ENCODE measurements at regions of chr14 and their contacts with region 1.

Region 1: GRCh38 chr14:89954070-89955028 is at the start of gene EFCAB11:
- DNase-seq: peak; percentile 98
- H3K4me3 Mint-ChIP-seq: peak within 1 kb of the TSS; percentile 96
- H3K27ac Mint-ChIP-seq: peak within 1 kb of the TSS; percentile 97
- H3K4me1 Mint-ChIP-seq: peaks cover 36% of the 10 kb centered on the region
- H3K27me3 Mint-ChIP-seq: no peaks in the 10 kb centered on the region
- total RNA-seq, gene EFCAB11: 10.6 to 10.8 TPM

Region 2: DNA sequence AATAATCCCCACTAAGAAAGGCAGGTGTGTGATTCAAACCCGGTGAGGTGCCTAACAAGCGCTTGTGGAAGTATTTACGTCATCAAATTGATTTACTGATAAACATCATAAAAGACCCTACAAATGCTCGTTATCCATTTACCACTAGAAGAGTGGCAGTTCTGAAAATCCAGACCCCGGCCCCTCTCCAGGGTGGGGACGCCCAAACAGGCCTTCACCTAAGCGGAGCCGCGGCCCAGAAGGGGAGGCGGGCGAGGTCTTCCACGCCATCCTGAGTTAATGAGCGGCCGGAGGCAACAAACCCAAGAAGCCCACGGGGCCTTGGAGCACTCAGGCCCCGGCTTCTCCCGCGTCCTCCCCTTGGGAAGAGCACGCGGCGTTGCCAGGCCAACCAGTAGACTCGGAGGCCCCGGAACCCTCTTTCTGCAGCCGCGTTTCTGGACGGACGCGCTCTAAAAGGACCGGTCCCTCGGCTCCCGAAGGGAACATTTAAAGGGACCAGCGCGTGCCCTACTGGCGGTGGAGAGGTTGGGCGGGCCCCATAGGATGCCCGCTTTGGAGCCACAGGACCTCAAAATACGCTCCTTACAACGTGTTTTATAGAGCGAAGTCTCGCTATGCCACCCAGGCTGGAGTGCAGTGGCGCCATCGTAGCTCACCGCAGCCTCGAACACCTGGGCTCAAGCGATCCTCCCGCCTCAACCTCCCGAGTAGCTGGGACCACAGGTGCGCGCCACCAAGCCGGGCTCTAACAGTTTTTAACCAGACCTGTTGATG is 1403.1 kb before region 1 on chr14:
- CTCF ChIA-PET with region 1: no interaction called
- POLR2A ChIA-PET with region 1: no interaction called
- intact Hi-C with region 1: loop called (anchors 10 kb)
- DNase-seq: peak; percentile 69
- H3K4me3 Mint-ChIP-seq: peak overlapping the region; percentile 62
- H3K27ac Mint-ChIP-seq: no peak overlapping the region
- H3K4me1 Mint-ChIP-seq: peaks cover 10% of the 10 kb centered on the region
- H3K27me3 Mint-ChIP-seq: peaks cover 34% of the 10 kb centered on the region

Region 3: GRCh38 chr14:89365061-89365801 is 589.1 kb before region 1 on chr14:
- CTCF ChIA-PET with region 1: no interaction called
- POLR2A ChIA-PET with region 1: no interaction called
- intact Hi-C with region 1: loop called (anchors 1 kb)
- DNase-seq: peak; percentile 73
- H3K4me3 Mint-ChIP-seq: peak overlapping the region; percentile 73
- H3K27ac Mint-ChIP-seq: peak overlapping the region; percentile 93
- H3K4me1 Mint-ChIP-seq: peaks cover 53% of the 10 kb centered on the region
- H3K27me3 Mint-ChIP-seq: no peaks in the 10 kb centered on the region

Region 4: DNA sequence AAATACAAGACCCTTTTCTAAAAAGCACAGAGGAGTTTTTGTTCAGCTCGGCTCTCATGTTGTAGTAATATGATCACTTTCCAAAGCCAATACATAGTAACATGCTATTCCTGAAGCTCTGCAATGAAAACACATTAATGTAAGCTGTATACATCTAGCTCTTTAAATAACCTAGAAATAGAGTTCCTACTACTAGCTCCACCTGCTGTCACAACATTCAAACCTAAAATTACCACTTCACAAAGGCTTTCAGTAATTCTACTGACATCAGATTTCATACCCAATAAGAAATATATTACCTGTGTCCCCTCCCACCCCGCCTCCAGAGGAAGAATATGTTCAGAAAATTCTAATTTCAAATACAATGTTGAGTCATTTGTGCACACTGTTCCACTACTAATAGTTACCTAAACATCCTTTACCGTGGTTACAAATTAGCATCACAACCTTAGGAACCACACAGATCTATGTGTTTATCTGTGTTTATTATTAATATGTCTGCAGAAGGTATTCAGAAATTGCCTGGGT is 17.6 kb before region 1 on chr14:
- CTCF ChIA-PET with region 1: interaction called, 61 read pairs
- POLR2A ChIA-PET with region 1: interaction called, 6 read pairs
- intact Hi-C with region 1: no loop called
- DNase-seq: no peak
- H3K4me3 Mint-ChIP-seq: no peak overlapping the region
- H3K27ac Mint-ChIP-seq: no peak overlapping the region
- H3K4me1 Mint-ChIP-seq: peaks cover 6% of the 10 kb centered on the region
- H3K27me3 Mint-ChIP-seq: no peaks in the 10 kb centered on the region

Region 5: DNA sequence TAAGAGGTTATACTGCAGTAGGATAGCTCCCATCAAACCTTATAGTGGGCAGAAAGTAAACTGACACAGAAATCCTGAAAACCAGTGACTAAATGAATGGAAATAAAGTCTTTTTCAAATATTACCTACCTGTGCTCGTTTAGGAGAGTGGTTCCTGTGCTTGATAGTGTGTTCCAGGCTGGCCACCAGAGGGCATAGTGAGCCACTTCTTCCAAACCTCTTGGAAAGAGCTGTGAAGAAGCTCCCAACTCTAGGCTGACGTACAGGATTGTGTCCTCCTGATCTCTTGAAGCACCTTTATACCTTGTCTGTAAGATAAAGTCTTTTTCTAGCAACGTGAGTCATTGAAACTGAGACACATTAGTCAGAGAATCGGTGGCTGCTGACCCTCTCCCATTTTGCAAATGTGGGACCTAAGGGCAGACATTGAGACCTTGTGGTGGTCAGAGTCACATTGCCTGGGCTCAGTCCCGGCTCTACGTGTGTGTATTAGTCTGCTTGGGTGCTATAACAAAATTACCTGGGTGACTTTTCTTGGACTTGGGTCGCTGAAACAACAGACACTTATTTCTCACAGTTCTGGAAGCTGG is 19.0 kb after region 1 on chr14:
- CTCF ChIA-PET with region 1: interaction called, 24 read pairs
- POLR2A ChIA-PET with region 1: no interaction called
- intact Hi-C with region 1: no loop called
- DNase-seq: peak; percentile 67
- H3K4me3 Mint-ChIP-seq: no peak overlapping the region
- H3K27ac Mint-ChIP-seq: no peak overlapping the region
- H3K4me1 Mint-ChIP-seq: peaks cover 8% of the 10 kb centered on the region
- H3K27me3 Mint-ChIP-seq: no peaks in the 10 kb centered on the region

Region 6: DNA sequence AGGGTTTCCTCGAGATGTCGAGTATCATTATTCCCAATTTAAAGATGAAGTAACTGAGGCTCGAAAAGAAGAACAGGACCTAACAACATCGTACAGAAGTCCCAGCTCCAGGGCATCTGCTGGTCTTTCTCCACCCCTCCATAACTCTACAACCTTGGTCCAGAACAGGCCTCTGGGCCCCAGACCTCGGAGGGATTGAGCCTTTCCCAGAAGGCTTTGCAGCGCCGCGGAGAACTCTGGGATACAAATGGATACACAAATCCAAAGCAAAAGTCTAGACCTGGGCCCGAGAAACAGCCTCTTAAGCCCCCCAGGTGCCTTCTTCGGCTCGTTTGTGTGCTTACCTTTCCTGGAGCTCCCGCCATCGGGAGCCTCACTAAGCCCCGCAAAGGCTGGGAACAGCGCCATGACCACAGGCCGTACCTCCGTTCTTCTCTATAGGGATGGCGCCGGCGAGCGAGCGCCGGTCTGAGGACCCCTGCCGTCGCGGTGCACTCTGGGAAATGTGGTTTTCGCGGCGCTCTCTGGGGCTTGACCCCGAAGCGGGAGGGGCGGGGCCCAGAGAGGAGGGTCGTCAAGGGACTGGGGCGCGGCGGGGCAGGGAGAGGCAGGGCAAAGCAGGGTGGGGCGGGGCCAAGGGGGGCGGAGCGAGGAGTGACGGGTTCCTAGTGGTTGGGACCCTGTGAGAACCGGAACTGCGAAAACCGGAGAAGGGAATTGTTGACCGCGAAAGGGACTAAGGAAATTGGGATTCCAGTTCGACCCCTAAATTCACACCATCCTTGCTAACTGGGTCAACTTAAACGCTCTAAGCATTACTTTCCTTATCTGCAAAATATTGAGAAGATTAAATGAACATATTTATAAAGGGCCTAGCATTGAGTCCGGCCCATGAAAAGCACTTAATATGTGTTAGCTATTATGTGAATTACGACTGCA is 377.4 kb after region 1 on chr14 and contains the start of gene NRDE2:
- CTCF ChIA-PET with region 1: no interaction called
- POLR2A ChIA-PET with region 1: no interaction called
- intact Hi-C with region 1: loop called (anchors 5 kb)
- DNase-seq: peak; percentile 99
- H3K4me3 Mint-ChIP-seq: peak within 1 kb of the TSS; percentile 88
- H3K27ac Mint-ChIP-seq: peak within 1 kb of the TSS; percentile 91
- H3K4me1 Mint-ChIP-seq: peaks cover 26% of the 10 kb centered on the region
- H3K27me3 Mint-ChIP-seq: peaks cover 3% of the 10 kb centered on the region
- total RNA-seq, gene NRDE2: 18.9 to 24.8 TPM

Region 7: GRCh38 chr14:90758028-90758889 is 803.9 kb after region 1 on chr14:
- CTCF ChIA-PET with region 1: no interaction called
- POLR2A ChIA-PET with region 1: no interaction called
- intact Hi-C with region 1: loop called (anchors 2 kb)
- DNase-seq: peak; percentile 97
- H3K4me3 Mint-ChIP-seq: peak overlapping the region; percentile 73
- H3K27ac Mint-ChIP-seq: peak overlapping the region; percentile 75
- H3K4me1 Mint-ChIP-seq: peaks cover 22% of the 10 kb centered on the region
- H3K27me3 Mint-ChIP-seq: no peaks in the 10 kb centered on the region

Measured in activated CD4-positive, alpha-beta memory T cell treated with anti-CD3 and anti-CD28 coated beads for 36 hours (primary cell).